Endothelial cell of umbilical vein (primary cell): ENCODE measurements at regions of chr1 and their contacts with region 1.

Region 1: DNA sequence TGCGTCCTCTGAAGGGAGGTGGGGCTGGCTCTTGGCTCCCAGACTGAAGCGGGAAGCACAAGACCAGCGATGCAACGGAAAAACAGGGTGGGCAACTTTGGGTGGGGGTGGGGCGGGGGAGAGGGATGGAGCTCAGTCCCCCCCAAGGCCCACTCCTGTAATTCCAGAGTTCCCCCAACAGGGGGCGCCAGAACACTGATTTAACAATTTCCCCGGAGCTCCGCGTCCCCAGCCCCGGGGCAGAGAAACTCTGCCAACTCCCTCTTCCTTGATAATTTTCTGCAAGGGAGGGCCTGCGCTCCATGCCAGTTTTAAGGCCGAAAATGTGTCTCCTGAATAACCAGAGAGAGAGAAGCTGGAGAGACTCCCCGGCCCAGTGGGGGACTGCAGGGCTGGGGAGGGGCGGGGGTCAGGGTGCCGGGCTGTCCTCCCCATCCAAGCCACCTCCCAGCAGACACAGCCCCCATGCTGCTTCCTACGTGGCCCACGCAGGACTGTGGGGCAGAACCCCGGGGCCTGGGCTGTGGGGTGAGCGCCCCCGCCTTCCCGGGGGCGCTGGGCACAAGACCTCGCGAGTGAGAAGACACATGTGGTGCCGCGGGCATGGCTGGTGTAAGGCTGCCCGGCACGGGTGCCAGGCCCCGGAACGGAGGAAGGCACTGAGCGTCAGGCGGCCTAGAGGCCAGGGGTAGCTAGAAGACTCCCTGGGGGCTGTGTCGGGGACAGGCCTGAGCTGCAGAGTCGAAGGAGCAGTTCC is 51.4 kb downstream of the KIF21B start:
- DNase-seq: peak; percentile 39
- H3K4me3 ChIP-seq: no peak overlapping the region
- H3K27ac ChIP-seq: no peak overlapping the region
- H3K4me1 ChIP-seq: no peaks in the 10 kb centered on the region
- H3K27me3 ChIP-seq: no peaks in the 10 kb centered on the region
- CTCF ChIP-seq: peak; percentile 52 to 72
- POLR2A ChIP-seq: no peak

Region 2: GRCh38 chr1:200558866-200559459 is 413.2 kb before region 1 on chr1:
- CTCF ChIA-PET with region 1: interaction called, 28 read pairs
- POLR2A ChIA-PET with region 1: no interaction called
- dilution Hi-C with region 1: no loop called
- intact Hi-C with region 1: no loop called
- DNase-seq: peak; percentile 84
- H3K4me3 ChIP-seq: no peak overlapping the region
- H3K27ac ChIP-seq: no peak overlapping the region
- H3K4me1 ChIP-seq: no peaks in the 10 kb centered on the region
- H3K27me3 ChIP-seq: no peaks in the 10 kb centered on the region
- CTCF ChIP-seq: peak; percentile 40 to 54
- POLR2A ChIP-seq: no peak

Region 3: DNA sequence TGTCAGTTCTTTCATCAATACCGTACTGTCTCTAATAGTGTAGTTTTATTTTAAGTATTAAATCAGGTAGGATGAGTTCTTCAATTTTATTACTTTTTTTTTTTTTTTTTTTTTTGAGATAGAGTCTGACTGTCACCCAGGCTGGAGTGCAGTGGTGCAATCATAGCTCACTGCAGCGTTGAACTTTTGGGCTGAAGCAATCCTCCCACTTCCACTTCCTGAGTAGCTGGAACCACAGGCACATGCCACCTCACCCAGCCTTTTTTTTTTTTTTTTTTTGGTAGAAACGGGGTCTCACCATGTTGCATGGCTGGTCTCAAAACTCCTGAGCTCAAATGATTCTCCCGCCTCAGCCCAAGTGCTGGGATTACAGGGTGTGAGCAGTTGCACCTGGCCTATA is 33.2 kb before region 1 on chr1:
- CTCF ChIA-PET with region 1: no interaction called
- POLR2A ChIA-PET with region 1: no interaction called
- dilution Hi-C with region 1: no loop called
- intact Hi-C with region 1: no loop called
- DNase-seq: no peak
- H3K4me3 ChIP-seq: no peak overlapping the region
- H3K27ac ChIP-seq: no peak overlapping the region
- H3K4me1 ChIP-seq: no peaks in the 10 kb centered on the region
- H3K27me3 ChIP-seq: peaks cover 0 to 4% of the 10 kb centered on the region in 2 experiments
- CTCF ChIP-seq: no peak
- POLR2A ChIP-seq: no peak

Region 4: DNA sequence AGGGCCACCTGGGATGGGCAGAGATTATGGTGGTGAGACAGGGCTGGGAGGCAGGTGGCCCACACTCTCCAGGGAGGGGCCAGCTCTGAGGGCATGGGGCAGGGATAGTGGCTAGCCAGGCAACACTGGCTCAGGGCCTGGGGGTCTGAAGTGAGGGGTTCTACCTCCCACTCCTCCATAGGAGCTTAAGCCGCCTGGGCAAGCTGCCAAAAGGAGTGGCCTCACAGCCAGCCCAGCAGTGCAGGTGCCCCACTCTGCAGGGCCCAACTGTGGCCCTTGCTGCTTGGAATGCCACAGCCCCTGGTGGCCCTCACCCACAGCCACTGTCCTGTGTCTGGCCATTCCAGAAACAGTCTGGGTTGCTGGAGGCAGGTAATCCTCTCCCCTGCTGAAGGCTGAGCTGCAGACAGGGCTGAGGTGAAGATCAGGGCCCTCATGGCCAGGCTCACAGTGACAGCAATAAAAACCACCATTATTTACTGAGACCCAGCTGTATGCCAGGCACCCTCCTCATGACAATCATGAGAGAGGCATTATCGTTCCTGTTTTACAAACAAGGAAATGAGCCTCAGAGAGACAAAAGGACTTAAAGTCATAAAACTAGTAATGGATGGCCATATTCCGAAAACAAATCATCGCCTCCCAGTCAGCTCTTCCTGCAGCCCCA is 20.4 kb after region 1 on chr1:
- CTCF ChIA-PET with region 1: interaction called, 63 read pairs
- POLR2A ChIA-PET with region 1: no interaction called
- dilution Hi-C with region 1: no loop called
- intact Hi-C with region 1: no loop called
- DNase-seq: no peak
- H3K4me3 ChIP-seq: no peak overlapping the region
- H3K27ac ChIP-seq: no peak overlapping the region
- H3K4me1 ChIP-seq: no peaks in the 10 kb centered on the region
- H3K27me3 ChIP-seq: no peaks in the 10 kb centered on the region
- CTCF ChIP-seq: no peak
- POLR2A ChIP-seq: no peak

Region 5: DNA sequence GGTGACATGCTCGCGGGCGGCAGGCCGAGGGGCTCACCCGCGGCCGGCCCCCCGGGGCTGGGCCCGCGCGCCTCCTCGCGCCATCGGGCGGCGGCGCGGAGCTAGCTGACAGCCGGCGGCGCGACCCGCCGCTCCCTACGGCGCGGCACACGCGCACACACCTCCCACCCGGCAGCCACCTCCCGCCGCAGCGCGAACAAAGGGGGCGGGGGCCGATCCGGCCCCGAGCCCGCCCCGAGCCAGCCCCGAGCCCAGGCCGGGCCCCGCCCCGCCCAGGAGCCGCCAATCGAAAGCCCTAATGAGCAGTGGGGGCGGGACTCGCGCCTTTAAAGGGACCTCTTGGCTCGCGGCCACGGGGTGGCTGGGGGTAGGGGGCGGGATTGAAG is 51.4 kb after region 1 on chr1 and contains the start of gene KIF21B:
- CTCF ChIA-PET with region 1: interaction called, 94 read pairs
- POLR2A ChIA-PET with region 1: no interaction called
- dilution Hi-C with region 1: no loop called
- intact Hi-C with region 1: no loop called
- DNase-seq: peak; percentile 75
- H3K4me3 ChIP-seq: peak within 1 kb of the TSS; percentile 11 to 49 (median 13)
- H3K27ac ChIP-seq: no peak within 1 kb of the TSS
- H3K4me1 ChIP-seq: peaks cover 37% of the 10 kb centered on the region
- H3K27me3 ChIP-seq: no peaks in the 10 kb centered on the region
- CTCF ChIP-seq: no peak
- POLR2A ChIP-seq: no peak
- total RNA-seq, gene KIF21B: 4.4 and 4.7 TPM in 2 replicates

Region 6: DNA sequence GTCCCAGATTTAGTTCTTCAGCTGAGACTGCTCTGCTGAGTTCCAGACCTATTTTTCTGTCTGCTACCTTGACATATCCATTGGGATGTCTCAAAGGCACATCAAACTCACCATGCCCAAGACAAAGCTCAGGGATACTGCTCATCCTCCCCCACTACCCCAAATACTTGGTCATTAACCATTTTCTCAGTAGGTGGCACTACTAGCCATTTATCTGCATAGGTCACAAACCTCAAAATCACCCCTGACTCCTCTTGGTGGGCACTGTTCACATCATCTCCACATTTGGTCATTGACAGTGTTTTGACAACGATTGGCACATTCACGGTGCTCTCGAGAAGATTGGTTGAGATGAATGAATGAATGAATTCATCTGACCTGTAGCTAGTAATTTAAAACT is 108.0 kb after region 1 on chr1:
- CTCF ChIA-PET with region 1: interaction called, 22 read pairs
- POLR2A ChIA-PET with region 1: no interaction called
- dilution Hi-C with region 1: no loop called
- intact Hi-C with region 1: no loop called
- DNase-seq: no peak
- H3K4me3 ChIP-seq: no peak overlapping the region
- H3K27ac ChIP-seq: no peak overlapping the region
- H3K4me1 ChIP-seq: no peaks in the 10 kb centered on the region
- H3K27me3 ChIP-seq: peaks cover 7% of the 10 kb centered on the region in 2 experiments
- CTCF ChIP-seq: no peak
- POLR2A ChIP-seq: no peak

Region 7: DNA sequence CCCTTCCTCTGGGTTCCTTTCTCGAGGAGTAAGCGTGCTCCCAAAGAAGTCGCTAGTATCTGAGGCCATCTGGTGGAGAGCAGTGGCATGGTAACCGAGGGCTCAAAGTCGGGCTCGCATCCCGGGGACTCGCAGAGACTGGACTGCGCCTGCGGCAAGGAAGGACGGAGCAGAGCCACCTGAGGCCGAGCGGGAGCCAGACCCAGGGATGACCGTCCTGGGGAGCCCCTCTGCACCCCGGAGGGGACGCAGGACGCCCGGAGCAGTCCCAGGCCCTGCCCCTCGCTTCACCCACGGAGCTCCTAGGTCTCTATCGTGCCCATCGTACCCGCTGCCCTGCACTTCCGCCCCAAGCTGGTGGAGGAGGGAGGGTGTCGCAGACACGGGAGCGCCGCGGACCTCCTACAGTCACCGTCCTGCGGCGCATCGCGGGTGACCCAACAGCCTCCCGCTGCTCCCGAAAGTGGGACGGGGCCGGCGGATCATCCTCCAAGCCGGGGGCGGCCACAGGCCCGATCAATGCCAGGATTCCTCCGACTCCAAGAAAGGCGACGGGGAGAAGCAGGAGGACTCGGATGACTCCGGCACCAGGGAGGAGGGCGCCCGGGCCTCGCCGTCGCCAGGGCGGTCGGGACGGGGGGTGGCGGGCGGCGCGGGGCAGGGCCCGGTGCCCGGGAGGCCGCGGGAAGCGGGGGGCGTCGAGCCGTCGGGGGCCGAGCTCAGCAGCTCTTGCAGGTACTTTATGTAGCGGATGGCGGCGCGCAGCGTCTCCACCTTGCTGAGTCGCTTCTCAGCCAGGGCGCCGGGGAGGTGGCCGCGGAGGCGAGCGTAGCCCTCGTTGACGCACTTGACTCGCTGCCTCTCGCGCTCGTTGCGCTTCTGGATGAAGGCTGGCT is 142.4 kb after region 1 on chr1:
- CTCF ChIA-PET with region 1: interaction called, 81 read pairs
- POLR2A ChIA-PET with region 1: no interaction called
- dilution Hi-C with region 1: no loop called
- intact Hi-C with region 1: loop called (anchors 1 kb)
- DNase-seq: peak; percentile 93
- H3K4me3 ChIP-seq: peak overlapping the region in 2 of 3 experiments; percentile 9 to 35
- H3K27ac ChIP-seq: no peak overlapping the region
- H3K4me1 ChIP-seq: no peaks in the 10 kb centered on the region
- H3K27me3 ChIP-seq: peaks cover 26 to 45% of the 10 kb centered on the region in 2 experiments
- CTCF ChIP-seq: peak; percentile 73 to 89
- POLR2A ChIP-seq: no peak

Region 8: GRCh38 chr1:201295861-201296260 is 323.7 kb after region 1 on chr1:
- CTCF ChIA-PET with region 1: no interaction called
- POLR2A ChIA-PET with region 1: no interaction called
- dilution Hi-C with region 1: no loop called
- intact Hi-C with region 1: no loop called
- DNase-seq: no peak
- H3K4me3 ChIP-seq: no peak overlapping the region
- H3K27ac ChIP-seq: no peak overlapping the region
- H3K4me1 ChIP-seq: no peaks in the 10 kb centered on the region
- H3K27me3 ChIP-seq: peaks cover 18 to 22% of the 10 kb centered on the region in 2 experiments
- CTCF ChIP-seq: no peak
- POLR2A ChIP-seq: no peak

Region 9: GRCh38 chr1:201309426-201309825 is 337.3 kb after region 1 on chr1:
- CTCF ChIA-PET with region 1: no interaction called
- POLR2A ChIA-PET with region 1: no interaction called
- dilution Hi-C with region 1: no loop called
- intact Hi-C with region 1: no loop called
- DNase-seq: peak; percentile 75
- H3K4me3 ChIP-seq: no peak overlapping the region
- H3K27ac ChIP-seq: no peak overlapping the region
- H3K4me1 ChIP-seq: peaks cover 8% of the 10 kb centered on the region
- H3K27me3 ChIP-seq: peaks cover 4 to 11% of the 10 kb centered on the region in 2 experiments
- CTCF ChIP-seq: peak in 1 of 2 donors; percentile 29
- POLR2A ChIP-seq: no peak